Heart left ventricle (tissue), 16 donors: ENCODE measurements at regions of chr16 and their contacts with region 1.

Region 1: DNA sequence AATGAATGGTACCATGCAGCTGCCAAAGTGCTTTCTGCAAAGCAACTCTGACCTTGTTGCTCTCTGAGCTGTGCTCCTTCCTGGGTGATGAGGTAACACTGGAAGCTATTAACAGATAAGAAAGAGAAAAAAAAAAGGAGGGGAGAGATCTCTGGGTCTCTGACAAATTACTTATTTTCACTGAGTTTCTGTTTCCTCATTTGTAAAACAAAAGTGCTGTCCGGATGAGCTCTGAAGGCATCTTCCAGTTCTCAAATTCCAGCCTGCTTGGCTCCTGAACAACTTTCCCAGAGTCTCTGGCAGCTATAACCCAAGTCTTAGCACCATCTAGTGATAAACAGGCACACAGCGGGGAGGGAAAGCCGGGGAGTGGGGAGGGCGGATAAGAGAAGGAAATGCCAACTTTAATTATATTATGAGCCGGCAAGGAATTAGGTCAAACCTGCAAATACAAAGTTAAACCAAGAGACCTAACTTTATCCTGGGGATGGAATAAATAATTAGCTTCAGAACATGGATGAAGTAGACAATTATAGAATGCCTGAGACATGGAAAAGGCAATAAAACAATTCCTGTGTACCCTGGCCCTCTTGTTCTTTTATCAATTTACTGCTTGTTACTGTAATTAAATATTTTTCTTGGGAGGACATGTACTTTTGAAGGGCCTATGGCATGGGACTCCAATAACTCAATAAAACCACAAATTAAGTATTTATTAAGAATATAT is 61.3 kb upstream of the KIFC3 start:
- DNase-seq: peak in 4 of 5 donors; percentile 61 to 71 (median 64)
- ATAC-seq: peak; percentile 89 to 93 (median 92)
- H3K4me3 ChIP-seq: no peak overlapping the region
- H3K27ac ChIP-seq: peak overlapping the region in 4 of 12 donors; percentile 6 to 58 (median 18)
- H3K4me1 ChIP-seq: peaks cover 0 to 25% (median 8%) of the 10 kb centered on the region in 12 donors
- H3K27me3 ChIP-seq: no peaks in the 10 kb centered on the region
- CTCF ChIP-seq: peak; percentile 39 to 84 (median 71)
- POLR2A ChIP-seq: no peak

Region 2: GRCh38 chr16:57591086-57591869 is 272.3 kb before region 1 on chr16:
- intact Hi-C with region 1: loop called in 3 of 10 experiments (anchors 10 kb)
- DNase-seq: peak; percentile 70 to 81 (median 71)
- ATAC-seq: peak; percentile 90 to 97 (median 94)
- H3K4me3 ChIP-seq: no peak overlapping the region
- H3K27ac ChIP-seq: peak overlapping the region in 1 of 12 donors; percentile 3
- H3K4me1 ChIP-seq: peaks cover 0 to 25% (median 6%) of the 10 kb centered on the region in 12 donors
- H3K27me3 ChIP-seq: peaks cover 0 to 7% (median 0%) of the 10 kb centered on the region in 9 donors
- CTCF ChIP-seq: peak; percentile 83 to 95 (median 88)
- POLR2A ChIP-seq: no peak

Region 3: DNA sequence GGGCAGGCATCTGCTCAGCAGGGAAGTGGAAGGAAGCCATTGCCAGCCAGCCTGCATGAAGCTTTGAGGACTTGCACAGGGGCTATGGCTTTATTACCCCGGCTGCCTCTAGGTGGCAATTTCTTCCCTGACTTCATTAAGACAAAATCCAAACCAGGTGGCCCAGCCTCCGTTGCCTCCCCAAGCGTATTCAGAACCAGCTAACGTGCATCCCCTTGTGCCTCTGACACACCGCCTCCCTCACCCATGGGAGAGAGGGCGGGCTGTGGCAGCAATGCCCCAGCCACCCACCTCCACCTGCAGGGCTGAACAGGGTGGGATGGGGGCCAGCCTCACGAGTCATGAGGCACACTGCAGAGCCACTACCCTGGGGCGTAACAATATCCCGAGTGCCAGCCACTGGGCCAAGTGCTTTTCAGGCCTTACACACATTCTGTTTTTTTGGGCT is 68.1 kb before region 1 on chr16:
- intact Hi-C with region 1: loop called in 8 of 10 experiments (anchors 2 to 10 kb)
- DNase-seq: peak in 1 of 5 donors; percentile 41
- ATAC-seq: peak in 2 of 4 donors; percentile 2 to 17
- H3K4me3 ChIP-seq: no peak overlapping the region
- H3K27ac ChIP-seq: peak overlapping the region in 4 of 12 donors; percentile 8 to 78 (median 52)
- H3K4me1 ChIP-seq: peaks cover 0 to 71% (median 51%) of the 10 kb centered on the region in 12 donors
- H3K27me3 ChIP-seq: no peaks in the 10 kb centered on the region
- CTCF ChIP-seq: peak in 11 of 12 donors; percentile 15 to 51 (median 36)
- POLR2A ChIP-seq: no peak

Region 4: DNA sequence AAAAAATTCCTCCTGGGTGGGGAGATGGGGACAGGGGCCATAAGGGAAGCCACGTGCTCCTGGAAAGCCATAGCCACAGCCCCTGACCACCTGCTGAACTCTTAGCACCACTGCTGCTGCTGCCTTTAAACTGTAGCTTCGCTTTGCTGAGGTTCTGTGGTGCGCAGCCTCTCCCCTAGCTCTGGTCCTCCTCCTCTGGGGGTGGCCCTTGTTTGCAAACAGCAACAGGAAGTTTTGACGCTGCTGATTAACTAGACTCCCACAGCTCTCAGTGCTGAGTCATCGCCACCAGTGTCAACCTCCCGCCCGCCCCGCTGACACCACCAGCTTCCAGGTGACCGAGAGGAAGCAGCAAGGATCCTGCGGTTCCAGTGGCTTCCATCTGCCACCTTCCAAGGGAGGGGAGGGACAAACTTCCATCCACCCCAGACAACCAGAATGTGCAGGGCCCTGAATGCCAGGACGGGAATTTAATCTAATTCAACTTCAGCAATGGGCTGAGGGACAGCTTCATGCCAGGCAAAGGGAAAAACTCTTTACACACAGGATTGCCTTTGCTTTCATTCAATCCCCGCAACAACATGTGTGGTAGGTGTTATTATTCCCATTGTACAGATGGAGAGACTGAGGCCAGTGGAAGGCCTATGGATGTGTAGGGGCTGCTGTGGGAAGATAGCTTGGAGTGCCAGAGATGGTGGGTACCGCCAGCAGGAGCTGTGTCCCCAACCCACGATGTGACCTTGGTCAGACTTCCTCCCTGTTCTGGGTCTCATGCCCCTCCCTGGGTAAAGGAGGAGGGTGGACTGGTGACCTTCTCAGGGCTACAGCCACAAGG is 53.2 kb before region 1 on chr16:
- intact Hi-C with region 1: loop called in 3 of 10 experiments (anchors 5 to 10 kb)
- DNase-seq: peak; percentile 82 to 88 (median 85)
- ATAC-seq: peak; percentile 51 to 90 (median 82)
- H3K4me3 ChIP-seq: no peak overlapping the region
- H3K27ac ChIP-seq: peak overlapping the region in 11 of 12 donors; percentile 28 to 79 (median 52)
- H3K4me1 ChIP-seq: peaks cover 8 to 47% (median 24%) of the 10 kb centered on the region in 12 donors
- H3K27me3 ChIP-seq: no peaks in the 10 kb centered on the region
- CTCF ChIP-seq: no peak
- POLR2A ChIP-seq: peak in 1 of 2 donors; percentile 49